ENCODE measurements at regions of chr4 and their contacts with region 1.

Region 1: DNA sequence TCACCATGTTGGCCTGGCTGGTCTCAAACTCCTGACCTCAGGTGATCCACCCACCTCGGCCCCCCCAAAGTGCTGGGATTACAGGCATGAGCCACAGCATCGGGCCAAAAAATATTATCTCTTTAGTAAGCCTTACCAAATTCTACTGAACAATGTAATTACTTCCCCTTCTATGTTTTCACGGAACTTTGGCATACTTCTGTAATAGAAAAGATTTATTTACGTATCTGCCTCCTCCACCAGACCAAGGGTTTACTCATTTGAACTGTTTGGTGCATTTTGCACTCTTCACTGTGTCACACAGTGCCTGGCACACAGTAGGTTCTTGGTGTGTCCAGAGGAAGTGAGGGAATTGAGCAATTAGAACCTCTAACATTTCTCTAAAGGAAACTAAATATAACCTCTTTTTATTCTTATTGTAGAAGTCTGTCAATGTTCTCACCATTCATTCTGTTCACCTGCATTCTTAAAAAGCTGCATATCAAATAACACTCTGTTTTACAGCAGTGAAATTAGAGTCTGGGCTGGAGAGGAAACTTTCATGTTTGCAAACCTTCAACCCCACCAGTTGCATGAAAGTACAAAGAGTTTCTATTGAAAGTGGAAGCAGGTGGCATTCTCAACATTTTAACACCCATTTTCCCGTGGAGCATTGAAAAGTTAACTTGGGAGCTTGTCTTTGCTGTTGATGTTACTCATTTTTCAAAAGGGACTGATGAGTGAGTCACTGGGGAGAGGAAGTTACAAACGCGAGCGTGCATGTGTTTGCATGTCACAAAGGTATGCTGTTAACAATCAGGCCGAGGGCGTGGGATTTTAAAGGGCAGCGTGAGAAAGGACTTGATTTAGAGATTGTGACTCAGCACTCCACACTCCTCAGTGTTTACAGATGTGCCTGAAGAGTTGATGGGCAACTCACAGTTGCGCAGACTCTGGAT is 314.1 kb downstream of the STK32B start:
- DNase-seq: no peak
- ATAC-seq: no peak
- H3K4me3 ChIP-seq: no peak overlapping the region
- H3K4me3 Mint-ChIP-seq: no peak overlapping the region
- H3K27ac ChIP-seq: no peak overlapping the region
- H3K27ac Mint-ChIP-seq: no peak overlapping the region
- H3K4me1 ChIP-seq: no peaks in the 10 kb centered on the region
- H3K4me1 Mint-ChIP-seq: peaks cover 0 to 1% (median 0%) of the 10 kb centered on the region in 7 donors
- H3K27me3 ChIP-seq: no peaks in the 10 kb centered on the region
- H3K27me3 Mint-ChIP-seq: peaks cover 0 to 4% (median 0%) of the 10 kb centered on the region in 5 donors

Region 2: GRCh38 chr4:5979976-5980375 is 614.6 kb after region 1 on chr4:
- CTCF ChIA-PET with region 1: no interaction called
- POLR2A ChIA-PET with region 1: no interaction called
- intact Hi-C with region 1: loop called in 1 of 2 experiments (anchors 10 kb)
- DNase-seq: no peak
- ATAC-seq: no peak
- H3K4me3 ChIP-seq: no peak overlapping the region
- H3K4me3 Mint-ChIP-seq: no peak overlapping the region
- H3K27ac ChIP-seq: no peak overlapping the region
- H3K27ac Mint-ChIP-seq: no peak overlapping the region
- H3K4me1 ChIP-seq: no peaks in the 10 kb centered on the region
- H3K4me1 Mint-ChIP-seq: no peaks in the 10 kb centered on the region
- H3K27me3 ChIP-seq: no peaks in the 10 kb centered on the region
- H3K27me3 Mint-ChIP-seq: peaks cover 16 to 38% (median 29%) of the 10 kb centered on the region in 5 donors

Measured in naive thymus-derived CD4-positive, alpha-beta T cell (primary cell).